Heart right ventricle (tissue), 16 donors: ENCODE measurements at regions of chr9 and their contacts with region 1.

Region 1: GRCh38 chr9:2424619-2425033 is 197.0 kb upstream of the VLDLR start:
- DNase-seq: peak in 1 of 2 donors; percentile 22
- ATAC-seq: peak; percentile 43 to 90 (median 70)
- H3K4me3 ChIP-seq: no peak overlapping the region
- H3K27ac ChIP-seq: peak overlapping the region in 2 of 10 donors; percentile 17 to 32
- H3K4me1 ChIP-seq: peaks cover 0 to 17% (median 0%) of the 10 kb centered on the region in 9 donors
- H3K27me3 ChIP-seq: no peaks in the 10 kb centered on the region
- CTCF ChIP-seq: no peak

Region 2: DNA sequence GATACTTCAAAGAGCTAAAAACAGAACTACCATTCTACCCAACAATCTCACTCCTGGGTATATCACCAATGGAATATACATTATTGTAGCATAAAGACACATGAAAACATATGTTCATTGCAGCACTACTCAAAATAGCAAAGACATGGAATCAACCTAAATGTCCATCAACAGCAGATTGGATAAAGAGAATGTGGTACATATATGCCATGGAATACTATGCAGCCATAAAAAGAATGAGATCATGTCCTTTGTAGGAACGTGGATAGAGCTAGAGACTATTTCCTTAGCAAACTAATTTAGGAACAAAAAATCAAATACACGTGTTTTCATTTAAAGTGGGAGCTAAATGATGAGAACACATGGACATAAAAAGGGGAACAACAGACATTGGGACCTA is 51.0 kb before region 1 on chr9:
- intact Hi-C with region 1: loop called in 1 of 10 experiments (anchors 5 kb)
- DNase-seq: no peak
- ATAC-seq: no peak
- H3K4me3 ChIP-seq: no peak overlapping the region
- H3K27ac ChIP-seq: no peak overlapping the region
- H3K4me1 ChIP-seq: no peaks in the 10 kb centered on the region
- H3K27me3 ChIP-seq: no peaks in the 10 kb centered on the region
- CTCF ChIP-seq: no peak

Region 3: DNA sequence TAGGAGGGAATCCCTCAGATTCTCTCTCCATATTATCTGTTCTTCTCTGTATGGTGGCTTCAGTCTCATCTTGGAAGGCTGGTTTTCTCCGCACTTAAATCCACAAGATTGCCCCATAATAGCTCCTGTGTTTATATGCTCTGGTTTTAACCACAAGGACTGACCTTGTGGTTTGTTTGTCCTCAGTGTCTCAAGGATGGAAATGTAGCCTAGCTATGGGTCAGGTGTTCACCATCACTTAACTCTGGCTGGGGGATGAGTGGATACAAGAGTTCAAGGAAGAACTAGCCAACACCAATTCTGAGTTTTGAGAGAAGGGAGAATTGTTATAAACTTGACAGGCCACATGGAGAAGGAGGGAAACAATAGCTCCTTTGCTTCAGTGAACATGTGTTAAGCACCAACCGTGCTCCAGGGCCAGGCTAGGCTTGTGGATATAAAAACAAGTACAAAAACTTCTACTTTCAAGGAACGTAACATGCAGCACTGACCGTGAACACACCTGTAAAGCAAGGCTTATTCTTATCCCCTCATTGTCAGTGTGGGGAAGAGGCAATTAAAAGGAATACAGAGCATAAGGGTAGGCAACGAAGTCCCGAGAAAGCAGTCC is 121.4 kb after region 1 on chr9:
- intact Hi-C with region 1: no loop called
- DNase-seq: no peak
- ATAC-seq: no peak
- H3K4me3 ChIP-seq: no peak overlapping the region
- H3K27ac ChIP-seq: no peak overlapping the region
- H3K4me1 ChIP-seq: no peaks in the 10 kb centered on the region
- H3K27me3 ChIP-seq: no peaks in the 10 kb centered on the region
- CTCF ChIP-seq: no peak